Activated CD8-positive, alpha-beta T cell treated with anti-CD3 and anti-CD28 coated beads, Interleukin-2, amount 10 ng/mL, durations not matched to agents 7 days and 5 days (primary cell): ENCODE measurements at regions of chr4 and their contacts with region 1.

Region 1: DNA sequence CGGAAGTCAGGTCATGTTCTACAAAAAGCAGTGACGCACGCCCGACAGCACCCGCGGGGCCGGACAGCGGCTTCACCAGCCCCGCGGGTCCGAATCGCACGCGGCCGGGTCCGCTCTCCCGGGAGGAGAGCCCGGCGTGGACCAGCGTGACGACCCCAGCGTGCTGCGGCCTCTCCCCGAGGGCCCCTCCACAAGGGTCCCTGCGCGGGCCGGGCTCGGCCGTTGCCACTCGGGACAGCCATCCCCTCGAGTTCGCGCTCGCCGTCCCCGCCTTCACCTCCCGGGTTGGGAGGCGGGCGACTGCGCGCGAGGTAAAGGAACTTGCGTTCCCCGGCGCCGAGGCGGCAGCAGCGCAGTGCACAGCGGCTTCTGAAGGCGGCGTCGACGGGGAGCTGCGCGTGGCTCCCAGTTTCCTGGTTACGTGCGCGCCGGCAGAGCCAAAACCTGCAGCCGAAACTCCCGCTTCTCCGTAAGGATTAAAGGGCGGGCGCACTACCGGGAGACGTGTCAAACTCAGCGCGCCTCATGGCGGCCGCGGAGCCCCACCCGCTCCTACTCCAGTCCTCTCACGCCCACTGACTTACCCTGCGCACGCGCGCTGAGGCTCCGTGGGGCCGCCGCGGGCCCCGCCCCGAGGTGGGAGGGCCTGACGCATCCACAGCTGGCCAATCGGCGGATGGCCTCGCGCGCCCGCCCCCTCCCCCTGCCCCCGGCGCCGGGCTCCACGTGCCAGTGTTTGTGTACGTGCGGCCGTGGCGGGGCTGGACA is 416 bp upstream of the LRP2BP start:
- DNase-seq: peak; percentile 96
- ATAC-seq: peak; percentile 90
- H3K4me3 Mint-ChIP-seq: peak overlapping the region; percentile 86
- H3K27ac Mint-ChIP-seq: peak overlapping the region; percentile 98
- H3K4me1 Mint-ChIP-seq: peaks cover 44% of the 10 kb centered on the region
- H3K27me3 Mint-ChIP-seq: no peaks in the 10 kb centered on the region

Region 2: DNA sequence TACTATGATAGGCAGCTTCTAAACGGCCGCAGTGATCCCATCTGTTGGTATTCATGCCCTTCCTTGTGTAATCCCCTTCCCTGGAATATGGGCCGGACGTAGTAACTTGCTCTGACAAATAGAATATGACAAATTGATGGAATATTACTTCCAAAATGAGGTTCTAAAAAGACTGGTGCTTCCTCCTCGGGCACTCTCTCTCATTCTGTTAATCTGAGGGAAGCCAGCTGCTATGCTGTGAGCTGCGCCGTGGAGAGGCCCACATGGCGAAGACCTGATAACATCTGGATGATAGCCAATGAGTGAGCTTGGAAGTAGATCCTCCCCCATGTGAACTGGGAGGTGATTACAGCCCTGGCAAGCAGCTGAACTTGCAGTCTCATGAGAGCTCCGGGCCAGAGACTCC is 280.3 kb before region 1 on chr4:
- CTCF ChIA-PET with region 1: no interaction called
- POLR2A ChIA-PET with region 1: no interaction called
- DNase-seq: no peak
- ATAC-seq: no peak
- H3K4me3 Mint-ChIP-seq: no peak overlapping the region
- H3K27ac Mint-ChIP-seq: no peak overlapping the region
- H3K4me1 Mint-ChIP-seq: no peaks in the 10 kb centered on the region
- H3K27me3 Mint-ChIP-seq: peaks cover 18% of the 10 kb centered on the region

Region 3: GRCh38 chr4:185425647-185426352 is 29.7 kb after region 1 on chr4 and contains the start of gene UFSP2:
- CTCF ChIA-PET with region 1: interaction called, 4 read pairs
- POLR2A ChIA-PET with region 1: interaction called, 18 read pairs
- DNase-seq: peak; percentile 87
- ATAC-seq: peak; percentile 92
- H3K4me3 Mint-ChIP-seq: peak within 1 kb of the TSS; percentile 88
- H3K27ac Mint-ChIP-seq: peak within 1 kb of the TSS; percentile 99
- H3K4me1 Mint-ChIP-seq: peaks cover 16% of the 10 kb centered on the region
- H3K27me3 Mint-ChIP-seq: no peaks in the 10 kb centered on the region
- total RNA-seq, gene UFSP2: 16.6 to 20.3 TPM